ENCODE measurements at regions of chr10 and their contacts with region 1.

Region 1: GRCh38 chr10:88114368-88114767 is 250.9 kb downstream of the PTEN start:
- DNase-seq: peak; percentile 68
- ATAC-seq: peak; percentile 41
- H3K4me3 ChIP-seq: no peak overlapping the region
- H3K4me3 Mint-ChIP-seq: peak overlapping the region; percentile 66
- H3K27ac ChIP-seq: peak overlapping the region; percentile 48 to 58
- H3K27ac Mint-ChIP-seq: peak overlapping the region; percentile 86
- H3K4me1 ChIP-seq: peaks cover 91 to 94% of the 10 kb centered on the region in 2 donors
- H3K4me1 Mint-ChIP-seq: peaks cover 57% of the 10 kb centered on the region
- H3K27me3 ChIP-seq: no peaks in the 10 kb centered on the region
- H3K27me3 Mint-ChIP-seq: no peaks in the 10 kb centered on the region
- CTCF ChIP-seq: peak; percentile 48

Region 2: GRCh38 chr10:87952612-87953011 is 161.8 kb before region 1 on chr10:
- CTCF ChIA-PET with region 1: interaction called, 7 read pairs
- POLR2A ChIA-PET with region 1: no interaction called
- intact Hi-C with region 1: loop called (anchors 10 kb)
- DNase-seq: no peak
- ATAC-seq: no peak
- H3K4me3 ChIP-seq: no peak overlapping the region
- H3K4me3 Mint-ChIP-seq: no peak overlapping the region
- H3K27ac ChIP-seq: no peak overlapping the region
- H3K27ac Mint-ChIP-seq: peak overlapping the region; percentile 38
- H3K4me1 ChIP-seq: peaks cover 0 to 3% of the 10 kb centered on the region in 2 donors
- H3K4me1 Mint-ChIP-seq: peaks cover 14% of the 10 kb centered on the region
- H3K27me3 ChIP-seq: no peaks in the 10 kb centered on the region
- H3K27me3 Mint-ChIP-seq: no peaks in the 10 kb centered on the region
- CTCF ChIP-seq: no peak

Region 3: DNA sequence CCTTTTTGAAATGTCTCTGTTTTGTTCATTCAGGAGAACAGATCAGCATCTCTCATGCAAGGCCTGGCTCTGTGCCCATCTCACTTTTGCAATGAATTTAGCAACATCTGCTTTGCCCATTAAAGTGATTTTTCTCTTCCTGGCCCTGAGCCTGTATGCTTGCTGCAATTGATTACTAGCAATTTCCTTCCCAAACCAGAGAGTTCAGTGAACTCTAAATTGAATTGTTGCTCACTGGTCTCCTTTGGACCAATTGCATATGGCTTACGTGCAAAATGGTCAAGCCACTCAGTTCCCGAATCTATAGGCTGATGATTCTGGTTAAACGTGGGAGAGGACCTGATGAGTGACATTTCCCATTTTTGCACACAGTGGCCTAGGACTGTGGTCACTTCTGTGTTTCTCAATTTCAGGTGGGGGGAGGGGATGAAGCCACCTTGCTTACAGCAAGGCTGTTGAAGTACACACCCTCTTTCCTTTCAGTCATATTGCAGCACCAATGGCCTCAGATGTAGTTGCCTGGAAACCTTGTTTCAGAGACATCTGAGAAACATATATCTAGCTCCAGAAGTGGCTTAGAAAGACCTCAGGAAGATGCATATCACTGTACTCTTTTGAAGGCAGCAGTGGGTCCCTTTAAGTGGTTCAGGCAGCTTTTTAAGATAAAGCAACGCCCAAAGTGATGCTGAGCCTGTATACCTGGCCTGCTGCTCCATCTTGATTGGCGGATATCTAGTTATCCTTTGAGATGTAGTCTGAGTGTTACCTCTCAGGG is 49.6 kb before region 1 on chr10:
- CTCF ChIA-PET with region 1: interaction called, 19 read pairs
- POLR2A ChIA-PET with region 1: interaction called, 4 read pairs
- intact Hi-C with region 1: no loop called
- DNase-seq: no peak
- ATAC-seq: no peak
- H3K4me3 ChIP-seq: no peak overlapping the region
- H3K4me3 Mint-ChIP-seq: no peak overlapping the region
- H3K27ac ChIP-seq: no peak overlapping the region
- H3K27ac Mint-ChIP-seq: no peak overlapping the region
- H3K4me1 ChIP-seq: peaks cover 87 to 91% of the 10 kb centered on the region in 2 donors
- H3K4me1 Mint-ChIP-seq: peaks cover 76% of the 10 kb centered on the region
- H3K27me3 ChIP-seq: no peaks in the 10 kb centered on the region
- H3K27me3 Mint-ChIP-seq: no peaks in the 10 kb centered on the region
- CTCF ChIP-seq: no peak

Region 4: DNA sequence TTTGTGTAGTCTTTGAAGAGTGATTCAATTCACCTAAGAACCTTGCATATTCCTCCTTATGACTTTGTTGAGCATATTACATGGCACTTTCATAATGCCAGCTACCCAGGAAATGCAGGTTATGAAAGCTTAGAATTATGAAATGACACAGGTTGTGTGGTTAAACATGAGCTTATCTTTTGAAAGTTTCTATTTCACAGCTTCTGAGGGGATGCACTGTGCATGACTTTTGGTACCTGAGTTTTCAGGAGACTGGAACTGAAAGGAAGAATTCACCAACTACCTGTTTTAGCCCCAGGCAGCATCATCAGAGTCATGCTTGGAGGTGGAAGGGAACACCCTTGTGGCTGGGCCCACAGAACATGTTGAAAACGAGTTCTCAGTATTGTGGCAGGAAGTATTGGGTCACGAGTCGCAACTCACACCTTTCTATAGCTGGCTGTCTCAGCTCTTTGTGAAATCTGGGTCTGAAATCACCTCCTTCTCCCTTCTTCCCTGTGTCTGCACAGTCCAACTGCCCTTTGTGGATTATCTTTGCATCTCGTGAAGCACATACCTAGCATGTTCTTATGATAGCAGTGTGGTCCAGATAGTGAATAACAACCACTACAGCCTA is 22.8 kb before region 1 on chr10:
- CTCF ChIA-PET with region 1: interaction called, 23 read pairs
- POLR2A ChIA-PET with region 1: no interaction called
- intact Hi-C with region 1: no loop called
- DNase-seq: peak; percentile 81
- ATAC-seq: peak; percentile 86
- H3K4me3 ChIP-seq: no peak overlapping the region
- H3K4me3 Mint-ChIP-seq: no peak overlapping the region
- H3K27ac ChIP-seq: peak overlapping the region; percentile 39 to 57
- H3K27ac Mint-ChIP-seq: peak overlapping the region; percentile 79
- H3K4me1 ChIP-seq: peaks cover 28 to 29% of the 10 kb centered on the region in 2 donors
- H3K4me1 Mint-ChIP-seq: peaks cover 37% of the 10 kb centered on the region
- H3K27me3 ChIP-seq: no peaks in the 10 kb centered on the region
- H3K27me3 Mint-ChIP-seq: no peaks in the 10 kb centered on the region
- CTCF ChIP-seq: no peak

Region 5: DNA sequence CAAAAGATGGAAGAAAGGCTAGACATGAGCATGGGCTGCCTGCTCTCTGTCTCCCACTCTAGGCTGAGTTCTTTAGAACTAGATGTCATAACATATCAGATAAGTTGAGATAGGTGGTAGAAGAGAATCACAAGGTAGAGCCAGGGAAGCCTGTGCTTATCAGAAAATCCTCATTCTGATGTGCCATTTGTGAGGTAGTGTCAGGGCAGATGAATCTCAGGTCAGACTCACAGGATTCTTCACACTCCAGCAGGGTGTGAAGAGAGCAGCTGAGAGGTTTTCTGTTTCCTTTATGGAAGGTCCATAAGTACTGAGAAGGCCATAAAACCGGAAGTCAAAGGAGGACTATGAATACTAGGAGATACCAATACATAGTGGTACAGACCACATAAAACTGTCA is 335.8 kb after region 1 on chr10:
- CTCF ChIA-PET with region 1: no interaction called
- POLR2A ChIA-PET with region 1: no interaction called
- intact Hi-C with region 1: no loop called
- DNase-seq: no peak
- ATAC-seq: no peak
- H3K4me3 ChIP-seq: no peak overlapping the region
- H3K4me3 Mint-ChIP-seq: no peak overlapping the region
- H3K27ac ChIP-seq: no peak overlapping the region
- H3K27ac Mint-ChIP-seq: no peak overlapping the region
- H3K4me1 ChIP-seq: no peaks in the 10 kb centered on the region
- H3K4me1 Mint-ChIP-seq: no peaks in the 10 kb centered on the region
- H3K27me3 ChIP-seq: no peaks in the 10 kb centered on the region
- H3K27me3 Mint-ChIP-seq: no peaks in the 10 kb centered on the region
- CTCF ChIP-seq: no peak

Region 6: GRCh38 chr10:88553116-88553752 is 438.9 kb after region 1 on chr10:
- CTCF ChIA-PET with region 1: interaction called, 6 read pairs
- POLR2A ChIA-PET with region 1: no interaction called
- intact Hi-C with region 1: loop called (anchors 5 kb)
- DNase-seq: peak; percentile 74
- ATAC-seq: peak; percentile 86
- H3K4me3 ChIP-seq: no peak overlapping the region
- H3K4me3 Mint-ChIP-seq: no peak overlapping the region
- H3K27ac ChIP-seq: no peak overlapping the region
- H3K27ac Mint-ChIP-seq: no peak overlapping the region
- H3K4me1 ChIP-seq: no peaks in the 10 kb centered on the region
- H3K4me1 Mint-ChIP-seq: no peaks in the 10 kb centered on the region
- H3K27me3 ChIP-seq: no peaks in the 10 kb centered on the region
- H3K27me3 Mint-ChIP-seq: no peaks in the 10 kb centered on the region
- CTCF ChIP-seq: peak; percentile 83

Measured in B cell (primary cell).